PC-3 (cell line): ENCODE measurements at regions of chr7 and their contacts with region 1.

Region 1: GRCh38 chr7:155598810-155599210 is 45.7 kb upstream of the RBM33 start:
- DNase-seq: peak; percentile 87
- ATAC-seq: peak; percentile 74
- H3K4me3 ChIP-seq: no peak overlapping the region
- H3K27ac ChIP-seq: no peak overlapping the region
- H3K4me1 ChIP-seq: no peaks in the 10 kb centered on the region
- H3K27me3 ChIP-seq: peaks cover 39% of the 10 kb centered on the region
- CTCF ChIP-seq: peak; percentile 95

Region 2: GRCh38 chr7:155653803-155654202 is 55.0 kb after region 1 on chr7:
- CTCF ChIA-PET with region 1: no interaction called
- POLR2A ChIA-PET with region 1: interaction called, 21 read pairs
- intact Hi-C with region 1: no loop called
- DNase-seq: no peak
- ATAC-seq: no peak
- H3K4me3 ChIP-seq: no peak overlapping the region
- H3K27ac ChIP-seq: no peak overlapping the region
- H3K4me1 ChIP-seq: peaks cover 15% of the 10 kb centered on the region
- H3K27me3 ChIP-seq: no peaks in the 10 kb centered on the region
- CTCF ChIP-seq: no peak

Region 3: GRCh38 chr7:155738652-155739537 is 140.1 kb after region 1 on chr7:
- CTCF ChIA-PET with region 1: interaction called, 6 read pairs
- POLR2A ChIA-PET with region 1: no interaction called
- intact Hi-C with region 1: loop called (anchors 1 kb)
- DNase-seq: peak; percentile 74
- ATAC-seq: peak; percentile 98
- H3K4me3 ChIP-seq: no peak overlapping the region
- H3K27ac ChIP-seq: no peak overlapping the region
- H3K4me1 ChIP-seq: no peaks in the 10 kb centered on the region
- H3K27me3 ChIP-seq: no peaks in the 10 kb centered on the region
- CTCF ChIP-seq: peak; percentile 78

Region 4: GRCh38 chr7:155763691-155764437 is 165.1 kb after region 1 on chr7:
- CTCF ChIA-PET with region 1: interaction called, 4 read pairs
- POLR2A ChIA-PET with region 1: no interaction called
- intact Hi-C with region 1: loop called (anchors 1 kb)
- DNase-seq: no peak
- ATAC-seq: no peak
- H3K4me3 ChIP-seq: no peak overlapping the region
- H3K27ac ChIP-seq: no peak overlapping the region
- H3K4me1 ChIP-seq: no peaks in the 10 kb centered on the region
- H3K27me3 ChIP-seq: no peaks in the 10 kb centered on the region
- CTCF ChIP-seq: no peak